ENCODE measurements at regions of chr17 and their contacts with region 1.

Region 1: DNA sequence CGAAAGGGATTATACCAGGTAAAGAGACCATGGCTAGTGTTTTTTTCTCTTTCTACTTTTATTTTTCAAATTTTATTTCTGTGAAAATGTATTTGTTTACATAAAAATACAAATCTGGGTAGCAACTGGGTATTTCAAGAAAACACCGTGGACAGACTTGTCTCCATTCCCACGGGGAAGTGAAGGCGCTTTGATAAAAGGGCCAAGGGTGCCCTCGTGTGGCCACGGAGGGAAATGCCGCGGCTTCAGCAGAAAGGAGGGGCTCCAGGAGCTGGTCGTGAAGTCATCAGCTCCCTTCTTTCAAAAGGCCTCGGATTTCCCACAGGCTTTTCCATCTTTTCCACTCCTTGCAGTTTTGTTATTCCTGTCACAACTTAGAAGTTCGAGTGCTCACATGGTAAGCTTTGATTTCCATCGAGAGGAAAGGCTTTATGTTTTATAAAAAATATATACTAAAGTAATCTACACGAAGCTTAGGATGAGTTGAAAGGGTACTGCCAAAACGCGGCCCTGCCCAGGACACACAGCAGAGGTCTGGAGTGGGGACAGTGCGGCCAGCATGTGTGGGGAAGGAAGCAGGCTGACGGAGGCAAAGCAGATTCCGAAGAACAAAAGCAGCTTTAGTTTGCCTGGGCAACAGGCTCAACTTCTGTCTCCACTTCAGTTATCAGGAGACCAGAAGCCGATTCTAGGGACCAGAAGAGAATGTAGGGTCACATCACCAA is 15.3 kb upstream of the MNT start:
- DNase-seq: peak; percentile 94
- H3K4me3 ChIP-seq: no peak overlapping the region
- H3K27ac ChIP-seq: peak overlapping the region in 3 of 4 donors; percentile 10 to 60 (median 52)
- H3K4me1 ChIP-seq: peaks cover 6 to 24% (median 7%) of the 10 kb centered on the region in 4 donors
- H3K27me3 ChIP-seq: no peaks in the 10 kb centered on the region
- CTCF ChIP-seq: peak; percentile 96 to 98 (median 98)
- EP300 ChIP-seq: no peak
- POLR2A ChIP-seq: no peak

Region 2: DNA sequence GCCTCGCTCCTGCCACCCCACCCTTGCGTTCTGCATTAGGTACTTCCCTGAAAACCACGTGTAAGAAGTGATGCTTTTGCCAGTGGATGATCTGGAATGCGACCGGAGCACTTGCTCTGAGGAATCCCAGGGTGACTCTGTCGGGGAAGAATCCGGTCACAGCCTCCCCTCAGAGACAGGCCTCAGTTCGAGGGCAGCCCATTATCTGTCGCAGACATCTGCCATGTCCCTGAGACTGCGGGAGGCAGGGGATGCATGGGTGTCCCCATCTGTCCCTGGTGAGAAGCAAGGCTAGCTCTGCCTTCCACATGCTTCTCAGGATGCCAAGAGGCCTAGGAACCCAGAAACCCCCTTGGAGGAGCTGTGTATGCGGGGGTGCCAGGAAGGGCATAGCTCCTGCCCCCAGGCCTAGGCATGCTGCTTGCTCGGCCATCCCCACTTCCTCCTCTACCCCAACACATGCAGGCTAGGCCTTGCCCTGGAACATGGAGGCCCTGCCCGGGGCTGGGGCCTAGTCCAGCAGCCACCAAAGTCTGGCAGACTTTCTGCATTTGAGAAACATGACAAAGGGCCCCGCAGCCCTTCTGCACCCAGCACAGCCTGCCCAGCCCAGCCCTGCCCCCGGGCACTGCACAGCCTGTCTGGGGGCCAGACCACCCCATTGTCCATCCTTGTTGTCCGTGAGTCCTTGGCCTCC is 35.8 kb before region 1 on chr17:
- in situ Hi-C with region 1: loop called in 3 of 4 experiments (anchors 5 to 10 kb)
- intact Hi-C with region 1: loop called (anchors 1 kb)
- DNase-seq: no peak
- H3K4me3 ChIP-seq: no peak overlapping the region
- H3K27ac ChIP-seq: no peak overlapping the region
- H3K4me1 ChIP-seq: peaks cover 0 to 13% (median 7%) of the 10 kb centered on the region in 4 donors
- H3K27me3 ChIP-seq: no peaks in the 10 kb centered on the region
- CTCF ChIP-seq: no peak
- EP300 ChIP-seq: no peak
- POLR2A ChIP-seq: no peak

Region 3: DNA sequence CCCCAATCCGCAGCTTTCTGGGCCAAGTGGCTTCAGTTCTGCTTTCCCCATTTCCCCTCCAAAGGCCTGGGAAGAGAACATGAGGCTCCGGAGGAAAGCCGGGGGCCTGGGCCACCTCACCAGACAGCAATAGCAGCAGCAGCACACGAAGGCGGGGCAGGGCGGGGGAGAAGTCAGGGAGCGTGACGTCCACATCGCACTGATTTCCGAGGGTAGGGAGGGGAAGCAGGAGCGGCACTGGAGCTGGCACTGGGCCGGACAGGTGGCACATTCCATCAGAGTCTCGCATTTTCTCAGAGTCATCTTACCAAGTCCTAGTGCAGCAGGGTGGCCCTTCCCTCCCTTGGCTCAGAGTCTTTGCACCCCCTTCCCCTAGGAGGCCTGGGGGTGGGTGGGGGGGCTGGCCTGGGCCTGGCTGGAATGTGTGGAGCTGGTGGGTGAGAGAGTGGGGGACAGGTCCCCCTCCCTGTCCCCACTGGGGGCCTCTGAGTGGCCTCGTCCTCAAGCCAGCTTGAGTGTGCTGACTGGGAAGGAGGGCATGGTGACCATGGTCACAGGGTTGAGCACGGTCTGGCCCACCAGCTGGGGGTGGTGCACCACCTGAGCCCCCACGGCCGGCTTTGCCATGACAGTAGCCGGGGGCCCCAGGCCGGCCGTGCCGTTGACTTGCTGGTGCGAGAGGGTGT is 29.6 kb before region 1 on chr17:
- in situ Hi-C with region 1: loop called in 2 of 4 experiments (anchors 5 kb)
- intact Hi-C with region 1: loop called (anchors 1 kb)
- DNase-seq: peak; percentile 82
- H3K4me3 ChIP-seq: no peak overlapping the region
- H3K27ac ChIP-seq: peak overlapping the region in 3 of 4 donors; percentile 2 to 16 (median 13)
- H3K4me1 ChIP-seq: peaks cover 12 to 34% (median 22%) of the 10 kb centered on the region in 4 donors
- H3K27me3 ChIP-seq: no peaks in the 10 kb centered on the region
- CTCF ChIP-seq: no peak
- EP300 ChIP-seq: no peak
- POLR2A ChIP-seq: no peak